ENCODE measurements at regions of chr21 and their contacts with region 1.

Region 1: GRCh38 chr21:41612674-41613532 is 104.9 kb upstream of the TMPRSS2 start:
- DNase-seq: peak; percentile 58
- CTCF ChIP-seq: peak; percentile 21

Region 2: GRCh38 chr21:41601573-41602368 is 11.1 kb before region 1 on chr21:
- CTCF ChIA-PET with region 1: interaction called, 10 read pairs
- POLR2A ChIA-PET with region 1: no interaction called
- DNase-seq: no peak
- CTCF ChIP-seq: no peak

Region 3: DNA sequence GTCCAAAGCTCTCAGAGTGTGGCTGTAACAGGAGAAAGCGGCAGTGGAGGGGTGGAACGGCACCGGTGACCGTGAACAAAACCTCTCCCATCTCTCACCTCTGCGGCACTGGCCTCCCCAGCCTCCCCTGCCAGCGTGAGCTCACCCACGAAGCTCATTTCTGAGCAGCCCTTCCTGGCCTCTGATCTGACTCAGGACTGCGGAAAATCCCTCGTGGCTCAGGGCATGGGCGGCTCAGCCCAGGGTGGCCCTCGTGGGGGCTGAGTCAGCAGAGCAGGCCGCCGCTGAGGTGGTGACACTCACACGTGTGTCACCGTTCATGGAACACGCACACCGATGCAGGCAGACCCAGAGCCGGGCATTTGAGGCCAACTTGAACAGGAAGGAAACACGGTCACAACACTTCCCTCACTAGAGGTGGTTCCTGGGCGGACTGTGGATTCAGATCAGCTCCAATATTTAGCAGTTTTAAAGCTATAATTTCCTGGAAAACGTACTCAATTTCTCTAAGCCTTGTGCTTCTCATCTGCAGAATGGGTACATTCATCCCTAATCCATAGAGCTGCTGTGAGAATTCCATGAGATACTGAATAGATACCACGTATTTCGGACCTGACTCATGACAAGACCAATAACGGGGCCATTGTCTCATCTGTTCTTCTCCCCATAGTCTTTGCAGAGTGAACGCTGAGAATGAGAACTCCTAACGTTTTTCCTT is 10.1 kb after region 1 on chr21:
- CTCF ChIA-PET with region 1: interaction called, 12 read pairs
- POLR2A ChIA-PET with region 1: no interaction called
- DNase-seq: no peak
- CTCF ChIP-seq: no peak